Calu3 (cell line): ENCODE measurements at regions of chr20 and their contacts with region 1.

Region 1: GRCh38 chr20:39170896-39171463 is 208.8 kb downstream of the DHX35 start:
- DNase-seq: no peak
- H3K4me3 Mint-ChIP-seq: no peak overlapping the region
- H3K27ac Mint-ChIP-seq: no peak overlapping the region
- H3K4me1 Mint-ChIP-seq: no peaks in the 10 kb centered on the region
- H3K27me3 Mint-ChIP-seq: peaks cover 65% of the 10 kb centered on the region
- CTCF ChIP-seq: no peak

Region 2: GRCh38 chr20:39146394-39146793 is 24.6 kb before region 1 on chr20:
- CTCF ChIA-PET with region 1: interaction called, 10 read pairs
- intact Hi-C with region 1: no loop called
- DNase-seq: no peak
- H3K4me3 Mint-ChIP-seq: no peak overlapping the region
- H3K27ac Mint-ChIP-seq: no peak overlapping the region
- H3K4me1 Mint-ChIP-seq: no peaks in the 10 kb centered on the region
- H3K27me3 Mint-ChIP-seq: peaks cover 94% of the 10 kb centered on the region
- CTCF ChIP-seq: no peak